AG04449 (cell line): ENCODE measurements at regions of chr1 and their contacts with region 1.

Region 1: GRCh38 chr1:206734499-206735142 is 36.0 kb upstream of the IL19 start:
- DNase-seq: no peak
- H3K4me3 ChIP-seq: no peak overlapping the region
- CTCF ChIP-seq: peak; percentile 70

Region 2: GRCh38 chr1:206635080-206635977 is 99.3 kb before region 1 on chr1 and contains the start of gene DYRK3:
- CTCF ChIA-PET with region 1: interaction called, 12 read pairs
- POLR2A ChIA-PET with region 1: no interaction called
- DNase-seq: no peak
- H3K4me3 ChIP-seq: peak within 1 kb of the TSS; percentile 86
- CTCF ChIP-seq: no peak

Region 3: GRCh38 chr1:206744683-206745082 is 10.1 kb after region 1 on chr1:
- CTCF ChIA-PET with region 1: interaction called, 41 read pairs
- POLR2A ChIA-PET with region 1: no interaction called
- DNase-seq: no peak
- H3K4me3 ChIP-seq: no peak overlapping the region
- CTCF ChIP-seq: no peak

Region 4: DNA sequence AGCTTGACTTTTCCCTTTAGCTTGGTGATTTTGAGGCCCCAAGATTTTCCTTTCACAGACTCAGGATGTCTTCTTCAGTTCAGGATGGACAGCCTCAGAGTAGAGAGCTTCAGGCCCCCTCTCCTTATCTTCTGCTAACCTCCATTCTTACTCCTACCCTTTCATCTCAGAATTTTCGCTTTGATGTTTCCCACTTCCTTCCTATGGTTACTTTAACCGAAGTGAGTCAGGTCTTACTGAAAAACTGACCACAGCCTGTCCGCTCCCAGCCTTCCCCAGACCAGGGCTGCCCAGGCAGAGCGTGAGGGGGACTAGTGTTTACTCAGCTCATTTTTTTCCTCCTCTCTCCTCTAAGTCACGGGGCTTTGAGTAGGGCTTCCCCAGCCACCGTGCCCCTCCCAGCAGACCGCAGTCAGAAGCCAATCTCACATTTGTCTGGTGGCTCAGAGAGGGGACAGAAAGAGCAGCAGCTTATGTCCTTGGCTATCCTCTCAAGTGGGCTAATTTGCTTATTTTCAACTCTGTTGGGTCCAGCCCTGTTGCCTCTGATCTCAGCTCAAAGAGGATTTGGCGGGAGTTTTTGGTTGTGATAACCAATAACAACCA is 31.7 kb after region 1 on chr1:
- CTCF ChIA-PET with region 1: interaction called, 10 read pairs
- POLR2A ChIA-PET with region 1: no interaction called
- DNase-seq: no peak
- H3K4me3 ChIP-seq: no peak overlapping the region
- CTCF ChIP-seq: no peak

Region 5: GRCh38 chr1:206808615-206809014 is 74.0 kb after region 1 on chr1:
- CTCF ChIA-PET with region 1: interaction called, 148 read pairs
- POLR2A ChIA-PET with region 1: no interaction called
- DNase-seq: no peak
- H3K4me3 ChIP-seq: no peak overlapping the region
- CTCF ChIP-seq: peak; percentile 49

Region 6: DNA sequence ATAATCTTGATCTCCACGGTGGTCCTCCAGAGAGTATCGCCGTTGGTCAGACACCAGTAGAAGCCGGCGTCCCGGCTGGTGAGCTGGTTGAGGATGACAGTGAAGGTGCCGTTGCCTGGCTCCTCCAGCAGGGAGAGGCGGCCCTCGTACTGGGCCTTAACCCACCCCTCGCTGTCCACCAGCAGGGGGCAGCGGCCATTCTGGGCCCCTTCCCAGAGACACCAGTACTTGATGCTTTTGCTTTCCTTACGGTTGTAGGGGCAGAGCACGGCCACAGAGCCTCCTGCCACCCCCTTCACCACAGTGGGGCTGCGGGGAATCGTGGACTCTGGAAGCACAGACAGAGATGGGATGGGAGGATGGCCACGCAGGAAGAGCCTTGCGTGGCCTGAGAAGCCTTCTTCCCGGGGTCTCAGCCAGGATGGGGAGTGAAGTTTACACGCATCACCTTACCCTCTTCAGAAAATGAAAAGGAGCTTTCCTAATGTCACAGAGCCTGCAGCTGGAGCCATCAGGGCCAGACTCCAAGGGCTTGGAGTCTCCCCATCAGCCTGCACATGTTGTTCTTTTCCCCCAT is 201.0 kb after region 1 on chr1:
- CTCF ChIA-PET with region 1: no interaction called
- POLR2A ChIA-PET with region 1: no interaction called
- DNase-seq: no peak
- H3K4me3 ChIP-seq: no peak overlapping the region
- CTCF ChIP-seq: peak; percentile 64